Activated CD4-positive, alpha-beta T cell treated with anti-CD3 and anti-CD28 coated beads for 36 hours (primary cell): ENCODE measurements at regions of chr16 and their contacts with region 1.

Region 1: GRCh38 chr16:21656795-21657768 is 4.7 kb upstream of the IGSF6 start:
- DNase-seq: peak; percentile 40
- ATAC-seq: no peak
- H3K4me3 Mint-ChIP-seq: no peak overlapping the region
- H3K27ac Mint-ChIP-seq: no peak overlapping the region
- H3K4me1 Mint-ChIP-seq: peaks cover 41% of the 10 kb centered on the region
- H3K27me3 Mint-ChIP-seq: no peaks in the 10 kb centered on the region

Region 2: DNA sequence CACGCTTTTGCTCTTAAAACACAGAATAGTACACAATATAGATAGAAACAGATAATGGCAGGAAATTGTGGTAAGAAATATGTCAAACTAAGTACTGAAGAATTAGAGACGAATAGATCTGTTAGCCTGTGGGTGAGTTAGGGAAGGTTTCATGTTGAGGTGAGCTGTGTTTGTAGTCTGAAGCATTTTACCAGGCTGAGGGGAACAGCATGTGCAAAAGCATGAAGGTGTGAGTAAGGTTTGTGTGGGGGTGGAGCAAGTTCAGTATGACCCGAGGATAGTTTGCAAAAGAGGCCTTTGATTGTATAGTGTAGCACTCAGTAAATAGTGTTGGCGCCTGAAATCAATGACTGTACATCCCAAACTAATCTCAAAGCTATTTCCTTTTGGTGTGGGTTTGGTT is 18.5 kb before region 1 on chr16:
- CTCF ChIA-PET with region 1: interaction called, 15 read pairs
- POLR2A ChIA-PET with region 1: interaction called, 3 read pairs
- intact Hi-C with region 1: no loop called
- DNase-seq: peak; percentile 57
- ATAC-seq: peak; percentile 92
- H3K4me3 Mint-ChIP-seq: no peak overlapping the region
- H3K27ac Mint-ChIP-seq: peak overlapping the region; percentile 74
- H3K4me1 Mint-ChIP-seq: peaks cover 31% of the 10 kb centered on the region
- H3K27me3 Mint-ChIP-seq: no peaks in the 10 kb centered on the region

Region 3: GRCh38 chr16:21673469-21673868 is 16.4 kb after region 1 on chr16:
- CTCF ChIA-PET with region 1: interaction called, 12 read pairs
- POLR2A ChIA-PET with region 1: no interaction called
- intact Hi-C with region 1: no loop called
- DNase-seq: no peak
- ATAC-seq: no peak
- H3K4me3 Mint-ChIP-seq: no peak overlapping the region
- H3K27ac Mint-ChIP-seq: no peak overlapping the region
- H3K4me1 Mint-ChIP-seq: no peaks in the 10 kb centered on the region
- H3K27me3 Mint-ChIP-seq: peaks cover 3% of the 10 kb centered on the region

Region 4: GRCh38 chr16:21698169-21699032 is 41.3 kb after region 1 on chr16:
- CTCF ChIA-PET with region 1: interaction called, 11 read pairs
- POLR2A ChIA-PET with region 1: no interaction called
- intact Hi-C with region 1: no loop called
- DNase-seq: no peak
- ATAC-seq: no peak
- H3K4me3 Mint-ChIP-seq: no peak overlapping the region
- H3K27ac Mint-ChIP-seq: no peak overlapping the region
- H3K4me1 Mint-ChIP-seq: no peaks in the 10 kb centered on the region
- H3K27me3 Mint-ChIP-seq: peaks cover 1% of the 10 kb centered on the region

Region 5: DNA sequence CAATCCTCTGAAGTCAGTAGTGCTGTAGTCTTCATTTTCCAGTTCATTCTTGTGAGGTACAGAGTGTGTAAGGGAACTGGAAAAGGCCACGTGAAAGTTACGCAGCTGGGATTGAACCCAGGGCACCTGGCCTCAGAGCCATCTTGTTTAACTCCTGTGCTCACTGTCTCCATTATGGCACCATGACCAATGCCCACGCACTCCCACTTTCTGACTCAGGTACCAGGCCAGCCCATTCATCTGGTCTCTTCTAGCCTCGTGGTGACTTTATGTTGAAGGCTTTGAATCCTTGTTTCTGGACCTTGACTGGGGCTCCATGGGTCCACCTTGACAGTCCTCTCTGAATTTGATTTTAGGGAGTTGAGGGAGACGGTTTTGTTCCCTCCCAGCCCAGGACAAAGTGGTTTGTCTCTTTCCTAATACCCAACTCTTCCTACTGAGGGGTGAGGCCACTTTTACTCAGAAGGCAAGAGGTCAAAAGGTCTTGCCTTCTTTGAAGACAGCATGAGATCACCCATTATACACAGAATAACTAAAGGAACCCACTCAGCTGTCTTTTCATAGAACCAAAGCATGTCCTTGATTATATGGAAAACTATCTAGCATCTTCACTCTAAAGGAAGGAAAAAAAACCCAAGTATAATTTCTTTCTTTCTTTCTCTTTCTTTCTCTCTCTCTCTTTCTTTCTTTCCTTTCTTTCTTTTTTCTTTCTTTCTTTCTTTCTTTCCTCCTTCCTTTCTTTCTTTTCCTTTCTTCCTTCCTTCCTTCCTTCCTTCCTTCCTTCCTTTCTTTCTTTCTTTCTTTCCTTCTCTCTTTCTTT is 56.7 kb after region 1 on chr16:
- CTCF ChIA-PET with region 1: interaction called, 40 read pairs
- POLR2A ChIA-PET with region 1: no interaction called
- intact Hi-C with region 1: loop called (anchors 1 kb)
- DNase-seq: peak; percentile 28
- ATAC-seq: peak; percentile 30
- H3K4me3 Mint-ChIP-seq: no peak overlapping the region
- H3K27ac Mint-ChIP-seq: no peak overlapping the region
- H3K4me1 Mint-ChIP-seq: peaks cover 3% of the 10 kb centered on the region
- H3K27me3 Mint-ChIP-seq: no peaks in the 10 kb centered on the region